ENCODE measurements at regions of chr11 and their contacts with region 1.

Region 1: DNA sequence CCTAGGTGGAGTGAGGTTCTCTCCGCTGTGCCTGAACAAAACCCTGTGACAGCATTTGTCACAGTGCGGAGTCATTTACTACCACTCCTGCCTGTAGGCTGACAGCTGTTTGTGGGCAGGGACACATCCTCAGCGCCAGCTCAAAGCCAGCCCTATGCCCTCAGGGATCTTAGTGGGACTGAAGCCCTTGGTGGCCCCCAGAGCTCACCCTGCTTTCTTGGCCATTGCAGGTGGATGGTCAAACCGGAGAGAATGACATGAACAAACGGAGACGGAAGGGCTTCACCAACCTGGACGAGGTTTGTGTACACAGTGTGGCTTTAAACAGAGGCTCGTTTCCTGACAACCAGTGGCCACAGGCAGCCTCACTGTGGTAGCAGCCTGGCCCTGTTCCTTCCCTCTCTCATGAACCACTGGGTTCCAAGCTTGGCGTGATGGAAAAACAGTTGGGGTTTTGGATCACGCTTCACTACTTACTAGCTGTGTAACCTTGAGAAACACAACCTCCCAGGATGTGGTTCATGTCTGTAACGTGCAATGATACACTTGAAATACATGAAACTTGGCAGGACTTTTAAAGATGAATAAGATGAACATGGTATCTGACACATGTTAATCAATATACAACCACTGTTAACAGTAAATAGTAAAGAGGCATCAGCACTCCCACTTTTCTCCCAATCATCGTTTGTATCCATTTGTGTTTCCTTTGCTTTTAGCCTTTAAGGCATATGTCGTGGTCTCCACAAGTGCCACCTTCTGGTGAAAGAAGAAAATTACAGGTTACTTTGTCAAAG is 125.8 kb downstream of the MICAL2 start:
- DNase-seq: peak; percentile 65 to 74 (median 67)
- H3K4me3 ChIP-seq: peak overlapping the region in 1 of 2 donors; percentile 0
- H3K4me3 Mint-ChIP-seq: peak overlapping the region; percentile 6 to 86 (median 76)
- H3K27ac ChIP-seq: peak overlapping the region; percentile 46
- H3K27ac Mint-ChIP-seq: peak overlapping the region; percentile 76 to 96 (median 93)
- H3K4me1 ChIP-seq: peaks cover 24% of the 10 kb centered on the region
- H3K4me1 Mint-ChIP-seq: peaks cover 15 to 26% (median 20%) of the 10 kb centered on the region in 4 donors
- H3K27me3 ChIP-seq: no peaks in the 10 kb centered on the region
- H3K27me3 Mint-ChIP-seq: no peaks in the 10 kb centered on the region

Region 2: GRCh38 chr11:12043959-12044819 is 192.0 kb before region 1 on chr11:
- CTCF ChIA-PET with region 1: interaction called, 149 read pairs
- POLR2A ChIA-PET with region 1: no interaction called
- intact Hi-C with region 1: loop called (anchors 1 kb)
- DNase-seq: peak in 4 of 5 donors; percentile 49 to 60 (median 50)
- H3K4me3 ChIP-seq: no peak overlapping the region
- H3K4me3 Mint-ChIP-seq: no peak overlapping the region
- H3K27ac ChIP-seq: no peak overlapping the region
- H3K27ac Mint-ChIP-seq: no peak overlapping the region
- H3K4me1 ChIP-seq: no peaks in the 10 kb centered on the region
- H3K4me1 Mint-ChIP-seq: peaks cover 2 to 5% (median 3%) of the 10 kb centered on the region in 4 donors
- H3K27me3 ChIP-seq: no peaks in the 10 kb centered on the region
- H3K27me3 Mint-ChIP-seq: no peaks in the 10 kb centered on the region

Region 3: GRCh38 chr11:12102588-12103410 is 133.3 kb before region 1 on chr11:
- CTCF ChIA-PET with region 1: interaction called, 21 read pairs
- POLR2A ChIA-PET with region 1: no interaction called
- intact Hi-C with region 1: no loop called
- DNase-seq: no peak
- H3K4me3 ChIP-seq: no peak overlapping the region
- H3K4me3 Mint-ChIP-seq: no peak overlapping the region
- H3K27ac ChIP-seq: no peak overlapping the region
- H3K27ac Mint-ChIP-seq: no peak overlapping the region
- H3K4me1 ChIP-seq: no peaks in the 10 kb centered on the region
- H3K4me1 Mint-ChIP-seq: peaks cover 3 to 5% (median 4%) of the 10 kb centered on the region in 4 donors
- H3K27me3 ChIP-seq: no peaks in the 10 kb centered on the region
- H3K27me3 Mint-ChIP-seq: peaks cover 0 to 2% of the 10 kb centered on the region in 2 donors

Region 4: DNA sequence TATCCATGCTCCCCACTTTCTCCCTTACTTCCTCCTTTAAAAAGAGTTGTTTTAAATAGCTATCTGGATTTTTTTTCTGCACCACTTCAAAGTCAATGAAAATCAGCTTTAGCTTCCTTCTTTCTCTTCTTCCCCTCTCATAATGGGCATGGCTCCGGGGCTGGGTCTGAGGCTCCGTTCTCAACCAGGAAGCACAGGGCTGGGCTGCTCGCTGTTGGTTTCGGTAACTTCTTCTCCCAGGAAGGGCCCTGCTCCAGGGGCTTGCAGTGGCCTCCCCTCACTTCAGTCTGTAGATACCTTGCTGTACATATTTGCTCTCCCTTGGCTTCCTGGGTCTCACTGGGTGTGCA is 101.9 kb before region 1 on chr11:
- CTCF ChIA-PET with region 1: interaction called, 10 read pairs
- POLR2A ChIA-PET with region 1: no interaction called
- intact Hi-C with region 1: no loop called
- DNase-seq: no peak
- H3K4me3 ChIP-seq: no peak overlapping the region
- H3K4me3 Mint-ChIP-seq: peak overlapping the region; percentile 29 to 84 (median 52)
- H3K27ac ChIP-seq: no peak overlapping the region
- H3K27ac Mint-ChIP-seq: peak overlapping the region; percentile 67 to 84 (median 75)
- H3K4me1 ChIP-seq: peaks cover 13% of the 10 kb centered on the region
- H3K4me1 Mint-ChIP-seq: peaks cover 23 to 35% (median 28%) of the 10 kb centered on the region in 4 donors
- H3K27me3 ChIP-seq: no peaks in the 10 kb centered on the region
- H3K27me3 Mint-ChIP-seq: no peaks in the 10 kb centered on the region

Region 5: GRCh38 chr11:12200279-12201010 is 35.7 kb before region 1 on chr11:
- CTCF ChIA-PET with region 1: interaction called, 54 read pairs
- POLR2A ChIA-PET with region 1: interaction called, 16 read pairs
- intact Hi-C with region 1: loop called (anchors 1 kb)
- DNase-seq: no peak
- H3K4me3 ChIP-seq: no peak overlapping the region
- H3K4me3 Mint-ChIP-seq: peak overlapping the region in 4 of 8 donors; percentile 9 to 93 (median 66)
- H3K27ac ChIP-seq: peak overlapping the region; percentile 52
- H3K27ac Mint-ChIP-seq: peak overlapping the region; percentile 87 to 98 (median 94)
- H3K4me1 ChIP-seq: peaks cover 59% of the 10 kb centered on the region
- H3K4me1 Mint-ChIP-seq: peaks cover 48 to 67% (median 57%) of the 10 kb centered on the region in 4 donors
- H3K27me3 ChIP-seq: no peaks in the 10 kb centered on the region
- H3K27me3 Mint-ChIP-seq: no peaks in the 10 kb centered on the region

Region 6: GRCh38 chr11:12272821-12273620 is 36.9 kb after region 1 on chr11:
- CTCF ChIA-PET with region 1: no interaction called
- POLR2A ChIA-PET with region 1: no interaction called
- intact Hi-C with region 1: no loop called
- DNase-seq: no peak
- H3K4me3 ChIP-seq: no peak overlapping the region
- H3K4me3 Mint-ChIP-seq: no peak overlapping the region
- H3K27ac ChIP-seq: no peak overlapping the region
- H3K27ac Mint-ChIP-seq: peak overlapping the region in 1 of 7 donors; percentile 39
- H3K4me1 ChIP-seq: no peaks in the 10 kb centered on the region
- H3K4me1 Mint-ChIP-seq: peaks cover 0 to 2% (median 0%) of the 10 kb centered on the region in 4 donors
- H3K27me3 ChIP-seq: no peaks in the 10 kb centered on the region
- H3K27me3 Mint-ChIP-seq: no peaks in the 10 kb centered on the region

Region 7: GRCh38 chr11:12288212-12288930 is 52.2 kb after region 1 on chr11:
- CTCF ChIA-PET with region 1: interaction called, 11 read pairs
- POLR2A ChIA-PET with region 1: no interaction called
- intact Hi-C with region 1: no loop called
- DNase-seq: peak in 4 of 5 donors; percentile 25 to 34 (median 26)
- H3K4me3 ChIP-seq: no peak overlapping the region
- H3K4me3 Mint-ChIP-seq: peak overlapping the region in 1 of 8 donors; percentile 25
- H3K27ac ChIP-seq: no peak overlapping the region
- H3K27ac Mint-ChIP-seq: peak overlapping the region in 1 of 7 donors; percentile 29
- H3K4me1 ChIP-seq: peaks cover 14% of the 10 kb centered on the region
- H3K4me1 Mint-ChIP-seq: peaks cover 7 to 28% (median 19%) of the 10 kb centered on the region in 4 donors
- H3K27me3 ChIP-seq: no peaks in the 10 kb centered on the region
- H3K27me3 Mint-ChIP-seq: peaks cover 0 to 2% of the 10 kb centered on the region in 2 donors

Region 8: DNA sequence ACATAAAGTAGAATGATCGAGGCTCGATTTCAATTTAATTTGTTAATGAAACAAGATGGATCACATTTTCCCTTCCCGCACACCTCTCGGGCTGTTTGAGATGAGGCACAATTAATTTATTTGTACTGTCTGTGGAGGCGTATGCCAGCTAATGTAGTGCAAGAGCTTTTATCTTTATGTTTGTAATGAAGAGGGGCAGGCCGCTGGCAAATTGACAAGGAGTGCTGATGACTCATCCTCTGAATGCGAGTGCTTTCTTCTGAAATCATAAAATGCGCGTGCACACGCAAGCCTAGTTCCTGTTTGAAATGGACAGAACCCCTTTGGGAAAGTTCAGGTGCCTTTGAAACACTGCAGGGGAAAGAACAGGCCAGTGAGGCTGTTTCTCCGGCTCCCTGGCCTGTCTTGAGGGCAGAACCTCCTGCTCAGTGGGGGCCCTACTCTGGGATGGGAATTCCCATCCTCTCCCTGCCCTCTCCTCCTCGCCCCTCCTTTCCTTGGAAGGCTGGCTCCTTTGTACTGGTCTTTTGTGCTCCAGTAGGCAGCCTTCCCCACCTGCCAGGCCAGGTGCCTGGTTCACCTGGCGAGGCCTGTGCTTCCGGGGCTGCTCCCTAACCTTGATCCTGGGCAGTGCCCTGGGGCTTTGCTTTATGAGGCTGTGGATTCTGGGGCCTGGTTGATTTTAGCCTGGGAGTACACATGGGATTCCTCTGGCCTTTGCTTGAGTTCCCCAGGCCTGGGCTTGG is 488.3 kb after region 1 on chr11:
- CTCF ChIA-PET with region 1: no interaction called
- POLR2A ChIA-PET with region 1: no interaction called
- intact Hi-C with region 1: no loop called
- DNase-seq: no peak
- H3K4me3 ChIP-seq: no peak overlapping the region
- H3K4me3 Mint-ChIP-seq: no peak overlapping the region
- H3K27ac ChIP-seq: no peak overlapping the region
- H3K27ac Mint-ChIP-seq: no peak overlapping the region
- H3K4me1 ChIP-seq: no peaks in the 10 kb centered on the region
- H3K4me1 Mint-ChIP-seq: peaks cover 0 to 6% (median 0%) of the 10 kb centered on the region in 4 donors
- H3K27me3 ChIP-seq: peaks cover 7% of the 10 kb centered on the region
- H3K27me3 Mint-ChIP-seq: peaks cover 40 to 56% of the 10 kb centered on the region in 2 donors

Region 9: GRCh38 chr11:12813371-12814225 is 577.5 kb after region 1 on chr11:
- CTCF ChIA-PET with region 1: no interaction called
- POLR2A ChIA-PET with region 1: no interaction called
- intact Hi-C with region 1: no loop called
- DNase-seq: no peak
- H3K4me3 ChIP-seq: no peak overlapping the region
- H3K4me3 Mint-ChIP-seq: no peak overlapping the region
- H3K27ac ChIP-seq: no peak overlapping the region
- H3K27ac Mint-ChIP-seq: no peak overlapping the region
- H3K4me1 ChIP-seq: peaks cover 11% of the 10 kb centered on the region
- H3K4me1 Mint-ChIP-seq: peaks cover 0 to 10% (median 7%) of the 10 kb centered on the region in 4 donors
- H3K27me3 ChIP-seq: no peaks in the 10 kb centered on the region
- H3K27me3 Mint-ChIP-seq: peaks cover 13 to 23% of the 10 kb centered on the region in 2 donors

Measured in CD4-positive, alpha-beta memory T cell (primary cell).